ENCODE measurements at regions of chr17 and their contacts with region 1.

Region 1: DNA sequence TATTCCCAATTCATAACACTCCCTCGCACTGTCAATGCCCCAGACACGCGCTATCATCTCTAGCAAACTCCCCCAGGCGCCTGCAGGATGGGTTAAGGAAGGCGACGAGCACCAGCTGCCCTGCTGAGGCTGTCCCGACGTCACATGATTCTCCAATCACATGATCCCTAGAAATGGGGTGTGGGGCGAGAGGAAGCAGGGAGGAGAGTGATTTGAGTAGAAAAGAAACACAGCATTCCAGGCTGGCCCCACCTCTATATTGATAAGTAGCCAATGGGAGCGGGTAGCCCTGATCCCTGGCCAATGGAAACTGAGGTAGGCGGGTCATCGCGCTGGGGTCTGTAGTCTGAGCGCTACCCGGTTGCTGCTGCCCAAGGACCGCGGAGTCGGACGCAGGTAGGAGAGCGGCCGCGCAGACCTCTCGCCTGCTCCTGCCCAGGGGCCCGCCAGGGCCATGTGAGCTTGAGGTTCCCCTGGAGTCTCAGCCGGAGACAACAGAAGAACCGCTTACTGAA is at the start of gene GRN:
- DNase-seq: peak; percentile 93
- ATAC-seq: peak; percentile 98 to 99
- H3K4me3 ChIP-seq: peak within 1 kb of the TSS; percentile 97
- H3K27ac ChIP-seq: peak within 1 kb of the TSS; percentile 92
- H3K4me1 ChIP-seq: peaks cover 43% of the 10 kb centered on the region
- H3K27me3 ChIP-seq: no peaks in the 10 kb centered on the region
- CTCF ChIP-seq: no peak
- total RNA-seq, gene GRN: 1,241 TPM

Region 2: GRCh38 chr17:44218344-44219107 is 126.5 kb before region 1 on chr17:
- intact Hi-C with region 1: loop called (anchors 10 kb)
- DNase-seq: peak; percentile 90
- ATAC-seq: peak; percentile 74 to 88
- H3K4me3 ChIP-seq: peak overlapping the region; percentile 97
- H3K27ac ChIP-seq: peak overlapping the region; percentile 96
- H3K4me1 ChIP-seq: peaks cover 35% of the 10 kb centered on the region
- H3K27me3 ChIP-seq: no peaks in the 10 kb centered on the region
- CTCF ChIP-seq: peak; percentile 68

Region 3: DNA sequence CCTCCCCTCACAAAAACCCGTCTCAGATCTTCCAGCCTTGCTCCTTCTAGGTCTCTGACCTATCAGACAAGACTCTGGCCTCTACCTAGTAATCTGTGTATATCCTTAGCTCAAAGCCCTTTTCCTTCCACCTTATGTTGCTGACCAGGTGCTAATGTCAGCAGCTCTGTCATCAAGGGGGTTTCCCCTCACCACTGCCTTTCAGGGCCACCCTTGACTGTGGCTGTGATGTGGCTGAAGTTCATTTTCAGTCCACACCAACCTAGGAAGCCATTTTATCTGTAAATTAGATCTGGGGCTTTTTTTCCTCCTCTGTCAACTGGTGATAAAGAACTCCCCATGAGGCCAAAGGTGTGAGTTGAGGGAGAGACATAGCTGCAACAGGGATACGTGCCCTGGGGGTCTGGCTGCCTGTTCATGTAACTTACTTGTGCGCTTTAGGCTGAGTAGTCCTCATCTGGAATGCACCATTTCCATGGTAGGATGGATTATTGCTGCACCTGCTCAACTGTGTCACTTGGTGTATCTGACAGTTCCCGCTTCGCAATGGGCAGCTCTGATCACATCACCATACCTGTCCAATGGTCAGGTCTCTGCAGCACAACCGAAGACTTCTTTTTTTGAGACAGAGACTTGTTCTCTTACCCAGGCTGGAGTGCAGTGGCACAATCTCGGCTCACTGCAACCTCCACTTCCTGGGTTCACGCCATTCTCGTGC is 51.3 kb before region 1 on chr17:
- intact Hi-C with region 1: no loop called
- DNase-seq: no peak
- ATAC-seq: no peak
- H3K4me3 ChIP-seq: no peak overlapping the region
- H3K27ac ChIP-seq: no peak overlapping the region
- H3K4me1 ChIP-seq: no peaks in the 10 kb centered on the region
- H3K27me3 ChIP-seq: peaks cover 3% of the 10 kb centered on the region
- CTCF ChIP-seq: no peak